ENCODE measurements at regions of chr12 and their contacts with region 1.

Region 1: DNA sequence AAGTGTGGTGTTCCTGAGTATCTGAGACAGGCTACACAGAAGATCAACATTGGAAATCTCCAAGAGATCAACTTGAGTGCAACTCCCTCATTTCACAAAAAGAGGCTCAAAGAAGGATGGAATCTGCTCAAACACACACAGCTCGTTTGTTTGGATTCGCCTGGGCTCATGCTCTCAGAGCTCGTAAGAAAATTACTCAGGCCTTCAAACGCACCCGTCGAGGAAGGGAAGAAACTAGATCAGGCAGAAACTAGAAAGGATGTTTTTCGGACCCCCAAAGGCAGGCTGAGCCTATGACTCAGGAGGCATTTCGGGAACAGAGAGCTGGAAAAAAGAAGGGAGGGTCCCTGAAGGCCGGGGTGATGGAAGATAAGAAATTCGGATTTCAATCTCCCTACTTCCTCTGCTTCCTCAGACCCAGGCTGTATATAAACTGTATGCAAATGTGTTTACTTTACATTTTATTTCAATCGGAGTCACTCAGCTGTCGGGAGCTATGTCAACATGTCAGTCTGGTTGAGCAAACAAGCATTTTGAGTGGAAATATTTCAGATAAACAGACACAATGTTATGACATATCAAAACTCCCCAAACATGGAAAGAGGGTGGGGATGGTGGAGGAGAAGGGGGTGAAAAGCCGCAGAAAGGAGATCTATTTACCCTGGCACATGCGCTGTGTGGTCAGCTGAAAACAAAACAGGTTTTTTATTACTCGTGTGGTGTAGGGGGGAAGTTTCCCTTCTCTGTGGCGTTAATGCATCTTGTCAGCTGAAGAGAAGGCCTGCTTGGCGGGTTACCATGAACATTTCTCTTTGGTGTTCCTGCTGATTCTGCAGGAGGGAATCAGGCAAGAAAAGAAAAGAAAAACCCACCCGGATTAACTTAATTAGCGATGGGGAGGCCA is 129.1 kb upstream of the TBX3 start:
- DNase-seq: peak; percentile 92
- ATAC-seq: peak; percentile 92
- H3K4me3 ChIP-seq: peak overlapping the region; percentile 55
- H3K27ac ChIP-seq: peak overlapping the region; percentile 66
- H3K4me1 ChIP-seq: peaks cover 8% of the 10 kb centered on the region
- H3K27me3 ChIP-seq: no peaks in the 10 kb centered on the region
- CTCF ChIP-seq: no peak

Region 2: GRCh38 chr12:114692558-114693480 is 120.3 kb before region 1 on chr12:
- CTCF ChIA-PET with region 1: no interaction called
- POLR2A ChIA-PET with region 1: no interaction called
- intact Hi-C with region 1: loop called (anchors 2 kb)
- DNase-seq: peak; percentile 72
- ATAC-seq: peak; percentile 62
- H3K4me3 ChIP-seq: peak overlapping the region; percentile 81
- H3K27ac ChIP-seq: peak overlapping the region; percentile 53
- H3K4me1 ChIP-seq: peaks cover 31% of the 10 kb centered on the region
- H3K27me3 ChIP-seq: no peaks in the 10 kb centered on the region
- CTCF ChIP-seq: peak; percentile 7; the same call in 1 of the 2 replicates

Region 3: GRCh38 chr12:114721266-114721665 is 91.8 kb before region 1 on chr12:
- CTCF ChIA-PET with region 1: no interaction called
- POLR2A ChIA-PET with region 1: no interaction called
- intact Hi-C with region 1: no loop called
- DNase-seq: no peak
- ATAC-seq: no peak
- H3K4me3 ChIP-seq: no peak overlapping the region
- H3K27ac ChIP-seq: no peak overlapping the region
- H3K4me1 ChIP-seq: no peaks in the 10 kb centered on the region
- H3K27me3 ChIP-seq: no peaks in the 10 kb centered on the region
- CTCF ChIP-seq: no peak

Region 4: GRCh38 chr12:114777052-114777451 is 36.1 kb before region 1 on chr12:
- CTCF ChIA-PET with region 1: no interaction called
- POLR2A ChIA-PET with region 1: no interaction called
- intact Hi-C with region 1: loop called (anchors 2 kb)
- DNase-seq: peak; percentile 93
- ATAC-seq: peak; percentile 84
- H3K4me3 ChIP-seq: peak overlapping the region; percentile 49; the same call in 1 of the 2 replicates
- H3K27ac ChIP-seq: peak overlapping the region; percentile 87
- H3K4me1 ChIP-seq: peaks cover 20% of the 10 kb centered on the region
- H3K27me3 ChIP-seq: no peaks in the 10 kb centered on the region
- CTCF ChIP-seq: no peak

Region 5: GRCh38 chr12:114868995-114869834 is 56.1 kb after region 1 on chr12:
- CTCF ChIA-PET with region 1: no interaction called
- POLR2A ChIA-PET with region 1: no interaction called
- intact Hi-C with region 1: no loop called
- DNase-seq: peak; percentile 42
- ATAC-seq: peak; percentile 75
- H3K4me3 ChIP-seq: no peak overlapping the region
- H3K27ac ChIP-seq: no peak overlapping the region
- H3K4me1 ChIP-seq: peaks cover 10% of the 10 kb centered on the region
- H3K27me3 ChIP-seq: no peaks in the 10 kb centered on the region
- CTCF ChIP-seq: no peak

Region 6: GRCh38 chr12:114903083-114903691 is 90.1 kb after region 1 on chr12:
- CTCF ChIA-PET with region 1: no interaction called
- POLR2A ChIA-PET with region 1: interaction called, 4 read pairs
- intact Hi-C with region 1: loop called (anchors 1 kb)
- DNase-seq: peak; percentile 96
- ATAC-seq: peak; percentile 87
- H3K4me3 ChIP-seq: peak overlapping the region; percentile 61
- H3K27ac ChIP-seq: peak overlapping the region; percentile 94
- H3K4me1 ChIP-seq: peaks cover 47% of the 10 kb centered on the region
- H3K27me3 ChIP-seq: no peaks in the 10 kb centered on the region
- CTCF ChIP-seq: no peak

Region 7: DNA sequence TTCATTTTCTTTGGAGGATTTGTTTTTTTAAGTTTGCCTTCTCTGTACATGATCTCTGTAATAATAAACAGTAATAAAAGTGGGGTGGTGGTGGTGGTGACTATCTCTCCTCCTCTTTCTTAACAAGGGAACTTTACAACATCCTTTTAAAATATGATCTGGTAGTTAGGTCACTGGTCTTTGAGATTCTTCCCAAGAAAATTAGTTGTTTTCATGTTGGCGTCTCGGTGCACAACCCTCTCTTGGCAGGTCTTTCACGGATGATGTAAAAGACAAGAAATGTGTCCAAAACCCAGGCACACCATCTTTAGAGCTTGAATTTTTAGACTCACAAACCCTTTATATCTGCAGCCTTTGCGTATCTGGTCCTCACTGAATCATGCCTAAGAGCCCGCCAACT is 359.4 kb after region 1 on chr12:
- CTCF ChIA-PET with region 1: no interaction called
- POLR2A ChIA-PET with region 1: no interaction called
- intact Hi-C with region 1: no loop called
- DNase-seq: no peak
- ATAC-seq: no peak
- H3K4me3 ChIP-seq: no peak overlapping the region
- H3K27ac ChIP-seq: no peak overlapping the region
- H3K4me1 ChIP-seq: no peaks in the 10 kb centered on the region
- H3K27me3 ChIP-seq: no peaks in the 10 kb centered on the region
- CTCF ChIP-seq: no peak

Region 8: GRCh38 chr12:115473257-115473956 is 660.3 kb after region 1 on chr12:
- CTCF ChIA-PET with region 1: no interaction called
- POLR2A ChIA-PET with region 1: no interaction called
- intact Hi-C with region 1: no loop called
- DNase-seq: peak; percentile 89
- ATAC-seq: peak; percentile 74
- H3K4me3 ChIP-seq: no peak overlapping the region
- H3K27ac ChIP-seq: no peak overlapping the region
- H3K4me1 ChIP-seq: peaks cover 11% of the 10 kb centered on the region
- H3K27me3 ChIP-seq: no peaks in the 10 kb centered on the region
- CTCF ChIP-seq: no peak

Measured in PC-3 (cell line).